ENCODE measurements at regions of chr1 and their contacts with region 1.

Region 1: GRCh38 chr1:93061895-93062792 is 16.9 kb upstream of the MTF2 start:
- DNase-seq: peak; percentile 42
- H3K4me3 ChIP-seq: no peak overlapping the region
- H3K27ac ChIP-seq: no peak overlapping the region
- H3K4me1 ChIP-seq: no peaks in the 10 kb centered on the region
- H3K27me3 ChIP-seq: no peaks in the 10 kb centered on the region
- CTCF ChIP-seq: peak; percentile 66

Region 2: DNA sequence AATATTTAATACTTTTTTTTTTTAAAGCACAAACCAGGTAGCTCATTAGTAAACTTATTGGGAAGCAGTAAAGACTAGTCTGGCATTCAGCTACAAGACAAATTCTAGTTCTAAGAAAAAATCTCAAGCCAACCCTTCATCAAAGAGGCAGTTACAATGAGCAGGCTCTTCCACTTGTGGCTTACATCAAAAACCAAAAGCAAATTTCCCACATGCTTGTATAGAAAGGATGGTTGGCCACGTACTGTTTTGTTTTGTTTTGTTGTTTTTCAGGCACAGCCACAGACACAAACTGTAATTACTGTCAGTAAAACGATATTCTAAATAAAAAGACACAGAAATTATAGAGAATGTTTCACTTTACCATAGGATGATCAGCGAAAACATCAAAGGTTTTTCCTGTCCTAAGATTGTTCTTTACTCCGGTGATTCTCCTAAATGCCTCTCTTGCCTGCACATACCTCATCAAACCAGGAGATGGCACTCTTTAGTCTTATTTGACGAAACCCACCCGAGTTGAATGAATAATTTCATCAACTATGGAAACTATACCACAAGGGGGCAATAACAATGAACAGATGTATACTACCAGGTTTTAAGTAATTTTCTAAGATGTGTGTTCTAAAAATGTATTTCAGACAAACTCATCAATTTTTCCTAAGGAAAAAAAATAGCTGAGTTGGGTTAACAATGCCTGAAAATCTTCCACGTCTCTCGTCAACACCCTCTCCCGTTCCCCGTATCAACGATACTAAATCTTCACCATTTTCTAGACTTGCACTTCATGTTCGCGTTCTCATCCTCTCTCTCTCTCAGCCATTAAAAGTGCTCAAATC is 203.4 kb before region 1 on chr1:
- intact Hi-C with region 1: loop called (anchors 5 kb)
- DNase-seq: peak; percentile 82
- H3K4me3 ChIP-seq: peak overlapping the region; percentile 11
- H3K27ac ChIP-seq: no peak overlapping the region
- H3K4me1 ChIP-seq: no peaks in the 10 kb centered on the region
- H3K27me3 ChIP-seq: no peaks in the 10 kb centered on the region
- CTCF ChIP-seq: peak; percentile 92

Region 3: GRCh38 chr1:93000751-93001175 is 61.4 kb before region 1 on chr1:
- intact Hi-C with region 1: loop called (anchors 5 kb)
- DNase-seq: no peak
- H3K4me3 ChIP-seq: no peak overlapping the region
- H3K27ac ChIP-seq: no peak overlapping the region
- H3K4me1 ChIP-seq: no peaks in the 10 kb centered on the region
- H3K27me3 ChIP-seq: no peaks in the 10 kb centered on the region
- CTCF ChIP-seq: no peak

Region 4: DNA sequence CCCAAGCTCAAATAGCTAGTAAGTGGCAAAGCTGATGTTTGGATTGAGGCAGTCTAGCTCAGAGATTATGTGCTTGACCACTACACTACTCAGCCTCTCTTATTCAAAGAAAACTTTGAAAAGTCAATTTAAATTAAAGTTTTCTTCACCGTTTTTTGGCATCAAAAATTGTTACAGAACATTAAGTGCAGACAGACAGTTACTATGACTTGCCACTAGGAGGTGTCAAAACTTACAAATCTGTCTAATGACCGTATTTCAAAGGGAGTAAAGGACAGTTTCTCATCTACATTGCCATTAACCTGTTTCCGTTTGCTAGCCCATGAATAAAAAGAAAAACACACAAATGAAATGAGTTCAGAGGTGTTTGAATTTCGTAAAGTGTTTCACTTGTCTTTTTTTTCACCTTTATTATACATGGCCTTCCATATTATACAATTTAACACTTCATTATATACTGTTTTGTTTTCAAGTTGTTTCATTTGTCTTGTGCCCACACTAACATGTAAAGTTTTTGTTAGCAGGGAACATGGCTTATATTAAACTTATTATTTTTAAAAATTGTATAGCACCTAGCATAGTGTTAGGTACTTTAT is 40.5 kb before region 1 on chr1:
- intact Hi-C with region 1: loop called (anchors 2 kb)
- DNase-seq: no peak
- H3K4me3 ChIP-seq: no peak overlapping the region
- H3K27ac ChIP-seq: no peak overlapping the region
- H3K4me1 ChIP-seq: no peaks in the 10 kb centered on the region
- H3K27me3 ChIP-seq: no peaks in the 10 kb centered on the region
- CTCF ChIP-seq: peak; percentile 63